ENCODE measurements at regions of chr15 and their contacts with region 1.

Region 1: DNA sequence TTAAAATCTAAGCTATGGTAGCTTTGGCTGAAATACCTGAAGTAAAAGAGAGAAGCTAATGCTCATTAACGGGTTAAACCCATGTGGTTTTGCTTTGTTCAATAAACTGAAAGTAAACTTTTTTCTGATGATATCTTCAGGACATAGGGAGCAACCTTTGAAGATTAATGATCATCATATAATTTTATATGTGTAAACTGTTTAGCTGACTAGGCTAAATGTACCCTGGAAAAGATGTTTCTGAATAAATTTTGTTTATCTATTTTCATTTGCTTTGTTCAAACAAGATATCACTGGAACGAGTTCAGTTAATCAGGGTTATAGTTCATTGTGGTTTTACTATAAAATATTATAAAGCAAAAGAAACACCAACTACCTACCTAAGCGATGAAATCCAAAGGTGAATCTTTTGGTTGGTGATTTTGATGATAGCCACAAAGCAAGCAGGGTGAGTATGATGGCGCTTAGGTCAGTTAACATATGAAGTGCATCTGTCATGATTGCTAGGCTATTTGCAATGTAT is 11.7 kb downstream of the SLC30A4 start:
- DNase-seq: no peak
- ATAC-seq: no peak
- H3K4me3 ChIP-seq: no peak overlapping the region
- H3K27ac ChIP-seq: no peak overlapping the region
- H3K4me1 ChIP-seq: no peaks in the 10 kb centered on the region
- H3K27me3 ChIP-seq: no peaks in the 10 kb centered on the region
- CTCF ChIP-seq: no peak
- POLR2A ChIP-seq: no peak
- RAD21 ChIP-seq: no peak

Region 2: GRCh38 chr15:44798826-44799225 is 712.0 kb before region 1 on chr15:
- CTCF ChIA-PET with region 1: no interaction called
- POLR2A ChIA-PET with region 1: no interaction called
- dilution Hi-C with region 1: no loop called
- in situ Hi-C with region 1: no loop called
- intact Hi-C with region 1: no loop called
- DNase-seq: no peak
- ATAC-seq: peak; percentile 46; the same call in 1 of the 2 replicates
- H3K4me3 ChIP-seq: no peak overlapping the region
- H3K27ac ChIP-seq: no peak overlapping the region
- H3K4me1 ChIP-seq: no peaks in the 10 kb centered on the region
- H3K27me3 ChIP-seq: peaks cover 3% of the 10 kb centered on the region
- CTCF ChIP-seq: no peak
- POLR2A ChIP-seq: no peak
- RAD21 ChIP-seq: no peak

Region 3: DNA sequence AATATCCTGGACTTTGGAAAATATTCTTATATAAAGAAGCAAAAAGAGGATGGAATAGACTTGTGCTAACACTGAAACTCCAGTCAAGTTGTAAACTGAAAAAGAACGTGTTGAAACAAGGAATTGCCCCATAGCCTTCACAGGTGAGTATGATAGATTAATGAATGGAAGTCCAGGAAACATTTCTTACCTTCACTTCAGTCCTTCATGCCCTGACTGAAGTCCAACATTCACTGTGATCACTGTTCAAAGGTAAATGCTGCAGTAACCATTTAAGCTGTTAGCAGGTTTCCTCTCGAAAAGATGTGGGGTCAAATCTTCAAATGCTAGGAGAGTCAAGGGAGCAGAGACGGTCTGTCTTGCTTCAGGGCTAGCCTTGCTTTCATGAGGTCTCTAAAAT is 34.4 kb before region 1 on chr15:
- CTCF ChIA-PET with region 1: no interaction called
- POLR2A ChIA-PET with region 1: no interaction called
- dilution Hi-C with region 1: no loop called
- in situ Hi-C with region 1: loop called (anchors 5 kb)
- intact Hi-C with region 1: no loop called
- DNase-seq: no peak
- ATAC-seq: no peak
- H3K4me3 ChIP-seq: no peak overlapping the region
- H3K27ac ChIP-seq: no peak overlapping the region
- H3K4me1 ChIP-seq: no peaks in the 10 kb centered on the region
- H3K27me3 ChIP-seq: peaks cover 2% of the 10 kb centered on the region
- CTCF ChIP-seq: no peak
- POLR2A ChIP-seq: no peak
- RAD21 ChIP-seq: no peak

Measured in IMR-90 (cell line).